ENCODE measurements at regions of chr1 and their contacts with region 1.

Region 1: DNA sequence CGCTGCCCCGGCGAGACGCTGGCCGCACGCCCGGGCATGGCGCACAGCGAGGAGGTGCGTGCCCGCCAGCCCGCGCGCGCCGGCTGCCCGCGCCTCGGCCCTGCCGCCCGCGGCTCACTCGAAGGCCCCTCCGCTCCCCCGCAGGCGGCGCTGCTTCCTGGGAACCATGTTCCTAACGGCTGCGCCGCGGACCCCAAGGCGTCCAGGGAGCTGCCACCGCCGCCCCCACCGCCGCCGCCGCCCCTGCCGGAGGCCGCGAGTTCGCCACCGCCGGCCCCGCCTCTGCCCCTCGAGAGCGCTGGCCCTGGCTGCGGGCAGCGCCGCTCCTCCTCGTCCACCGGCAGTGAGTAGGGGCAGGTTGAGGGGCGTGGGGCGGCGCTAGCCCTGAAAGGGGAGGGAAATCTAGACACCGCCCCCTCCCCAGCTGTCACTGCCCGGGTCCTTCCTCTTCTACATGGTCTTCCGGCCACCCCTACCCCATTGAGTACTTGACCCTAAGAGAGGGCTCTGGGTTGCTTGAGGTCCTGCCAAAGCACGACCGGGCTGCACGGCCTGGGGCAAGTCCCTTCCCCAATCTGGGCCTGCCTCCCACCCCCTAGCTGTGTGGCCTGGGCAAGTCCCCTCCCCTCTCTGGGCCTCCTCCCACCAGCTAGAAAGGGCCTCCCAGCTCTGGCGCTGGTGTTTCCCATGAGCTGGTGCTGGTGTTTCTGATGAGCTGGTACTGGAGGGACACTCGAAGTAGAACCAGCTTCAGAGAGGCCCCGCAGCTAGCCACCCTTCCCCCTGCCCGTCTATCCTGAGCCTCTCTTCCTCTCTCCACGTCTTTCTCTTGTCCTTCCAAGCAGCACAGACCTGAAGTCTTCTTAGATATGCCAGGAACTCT is 17.0 kb downstream of the TNFRSF25 start:
- H3K4me3 ChIP-seq: no peak overlapping the region
- H3K27ac ChIP-seq: no peak overlapping the region
- H3K4me1 ChIP-seq: no peaks in the 10 kb centered on the region
- CTCF ChIP-seq: no peak

Region 2: GRCh38 chr1:6396998-6397397 is 52.0 kb before region 1 on chr1:
- CTCF ChIA-PET with region 1: no interaction called
- POLR2A ChIA-PET with region 1: no interaction called
- H3K4me3 ChIP-seq: no peak overlapping the region
- H3K27ac ChIP-seq: no peak overlapping the region
- H3K4me1 ChIP-seq: peaks cover 4% of the 10 kb centered on the region; the same call in 1 of the 2 replicates
- CTCF ChIP-seq: peak; percentile 67

Region 3: GRCh38 chr1:6423321-6423999 is 25.5 kb before region 1 on chr1:
- CTCF ChIA-PET with region 1: interaction called, 117 read pairs
- POLR2A ChIA-PET with region 1: interaction called, 3 read pairs
- H3K4me3 ChIP-seq: no peak overlapping the region
- H3K27ac ChIP-seq: no peak overlapping the region
- H3K4me1 ChIP-seq: no peaks in the 10 kb centered on the region; the same call in 1 of the 2 replicates
- CTCF ChIP-seq: peak; percentile 89

Measured in HEK293 (cell line).